Natural killer cell (primary cell): ENCODE measurements at regions of chr4 and their contacts with region 1.

Region 1: GRCh38 chr4:144174401-144175067 is 34.0 kb upstream of the GYPA start:
- DNase-seq: peak in 1 of 2 donors; percentile 67
- ATAC-seq: peak in 2 of 3 donors; percentile 59 to 60
- H3K4me3 ChIP-seq: no peak overlapping the region
- H3K4me3 Mint-ChIP-seq: no peak overlapping the region
- H3K27ac ChIP-seq: no peak overlapping the region
- H3K27ac Mint-ChIP-seq: no peak overlapping the region
- H3K4me1 ChIP-seq: no peaks in the 10 kb centered on the region
- H3K4me1 Mint-ChIP-seq: no peaks in the 10 kb centered on the region
- H3K27me3 ChIP-seq: no peaks in the 10 kb centered on the region
- H3K27me3 Mint-ChIP-seq: peaks cover 5% of the 10 kb centered on the region in 2 donors
- CTCF ChIP-seq: peak; percentile 51

Region 2: GRCh38 chr4:145061318-145061920 is 886.9 kb after region 1 on chr4:
- intact Hi-C with region 1: loop called (anchors 1 kb)
- DNase-seq: peak in 1 of 2 donors; percentile 67
- ATAC-seq: peak; percentile 62 to 73 (median 66)
- H3K4me3 ChIP-seq: no peak overlapping the region
- H3K4me3 Mint-ChIP-seq: no peak overlapping the region
- H3K27ac ChIP-seq: no peak overlapping the region
- H3K27ac Mint-ChIP-seq: no peak overlapping the region
- H3K4me1 ChIP-seq: no peaks in the 10 kb centered on the region
- H3K4me1 Mint-ChIP-seq: peaks cover 13 to 20% of the 10 kb centered on the region in 2 donors
- H3K27me3 ChIP-seq: no peaks in the 10 kb centered on the region
- H3K27me3 Mint-ChIP-seq: no peaks in the 10 kb centered on the region
- CTCF ChIP-seq: peak; percentile 74